Activated CD4-positive, alpha-beta T cell treated with anti-CD3 and anti-CD28 coated beads, Interleukin-2, amount 10 ng/mL, durations not matched to agents 24 days and 14 days (primary cell): ENCODE measurements at regions of chr20 and their contacts with region 1.

Region 1: DNA sequence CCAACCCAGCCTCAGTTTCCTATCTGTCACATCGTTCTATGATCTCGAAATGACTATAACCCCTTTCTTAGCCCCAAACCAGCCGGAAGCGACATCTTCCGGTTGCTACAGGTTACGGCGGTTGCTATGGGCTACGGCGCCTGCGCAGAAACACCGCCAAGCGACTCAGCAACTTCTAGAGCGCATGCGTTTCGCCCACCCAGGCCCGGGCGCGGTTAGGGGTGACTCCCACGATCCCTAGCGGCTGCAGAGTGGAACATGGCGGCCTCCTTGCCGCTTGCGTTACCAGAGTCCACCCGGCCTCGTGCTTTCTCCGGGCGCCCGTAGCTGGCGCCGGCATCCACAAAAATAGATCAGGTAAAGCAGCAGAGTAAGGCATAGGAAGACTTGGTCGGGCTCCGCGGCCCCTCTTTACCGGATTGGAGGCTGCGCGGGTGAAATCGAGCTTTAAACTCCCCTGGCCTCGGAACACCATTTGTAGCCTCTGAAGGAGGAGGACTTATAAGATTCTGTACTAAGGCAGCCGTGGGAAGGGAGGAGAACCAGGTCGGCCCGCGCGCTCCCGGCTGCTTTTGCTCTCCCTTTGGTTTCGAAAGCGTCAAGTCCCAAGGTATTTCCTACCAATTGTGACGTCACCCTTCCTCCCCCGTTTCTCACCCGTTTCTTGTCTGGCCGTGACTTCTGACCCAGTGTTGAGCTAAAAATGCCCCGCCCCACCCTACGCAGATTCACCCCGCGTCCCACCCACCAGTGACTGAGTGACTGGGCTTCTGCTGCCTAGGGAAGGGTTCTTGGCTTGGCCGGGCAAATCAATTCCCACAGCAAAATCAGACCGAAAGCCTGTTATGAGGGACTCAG is 3.5 kb downstream of the SDCBP2 start:
- DNase-seq: peak; percentile 99
- H3K4me3 Mint-ChIP-seq: no peak overlapping the region
- H3K27ac Mint-ChIP-seq: no peak overlapping the region
- H3K4me1 Mint-ChIP-seq: peaks cover 36% of the 10 kb centered on the region
- H3K27me3 Mint-ChIP-seq: no peaks in the 10 kb centered on the region

Region 2: GRCh38 chr20:1212607-1213396 is 112.6 kb before region 1 on chr20:
- intact Hi-C with region 1: no loop called
- DNase-seq: peak; percentile 91
- H3K4me3 Mint-ChIP-seq: no peak overlapping the region
- H3K27ac Mint-ChIP-seq: no peak overlapping the region
- H3K4me1 Mint-ChIP-seq: peaks cover 31% of the 10 kb centered on the region
- H3K27me3 Mint-ChIP-seq: peaks cover 21% of the 10 kb centered on the region

Region 3: DNA sequence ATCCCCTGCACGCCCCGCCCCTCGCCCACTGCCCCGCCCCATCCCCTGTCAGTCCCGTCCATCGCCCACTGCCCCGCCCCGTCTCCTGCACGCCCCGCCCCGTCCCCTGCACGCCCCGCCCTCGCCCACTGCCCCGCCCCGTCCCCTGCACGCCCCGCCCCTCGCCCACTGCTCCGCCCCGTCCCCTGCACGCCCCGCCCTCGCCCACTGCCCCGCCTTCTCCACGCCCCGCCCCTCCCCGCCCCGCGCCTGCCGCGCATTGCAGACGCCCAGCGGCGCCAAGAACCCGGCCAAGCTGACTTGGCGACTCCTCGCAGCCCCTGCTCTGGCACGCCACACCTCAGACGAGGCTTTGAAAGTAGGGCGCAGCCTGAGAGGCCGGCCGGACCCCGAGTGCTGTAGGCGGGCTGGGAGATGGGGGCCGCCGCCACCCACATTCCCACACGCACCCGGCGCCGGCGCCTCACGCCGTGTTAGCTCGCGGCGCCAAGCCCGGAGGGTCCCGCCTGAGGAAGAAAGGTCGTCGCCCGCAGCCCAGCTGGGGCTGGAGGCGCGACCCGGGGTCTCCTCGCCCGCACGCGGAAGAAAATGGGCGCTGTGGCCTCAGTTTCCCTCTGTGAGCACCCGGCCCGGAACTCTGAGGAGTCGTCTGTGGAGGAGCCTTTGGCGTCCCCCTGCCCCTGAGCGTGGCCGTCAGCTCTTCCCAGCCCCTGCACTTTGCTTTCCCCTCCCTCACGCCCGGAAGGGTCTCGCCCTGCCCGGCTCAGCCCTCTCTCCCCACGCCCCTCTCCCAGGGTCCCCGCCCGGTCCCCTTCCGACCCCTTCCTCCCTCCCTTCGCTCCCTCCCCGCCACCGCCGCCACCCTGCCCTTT is 99.4 kb before region 1 on chr20 and contains the start of gene RAD21L1:
- intact Hi-C with region 1: loop called (anchors 10 kb)
- DNase-seq: peak; percentile 88
- H3K4me3 Mint-ChIP-seq: peak within 1 kb of the TSS; percentile 86
- H3K27ac Mint-ChIP-seq: peak within 1 kb of the TSS; percentile 11
- H3K4me1 Mint-ChIP-seq: peaks cover 16% of the 10 kb centered on the region
- H3K27me3 Mint-ChIP-seq: peaks cover 50% of the 10 kb centered on the region
- total RNA-seq, gene RAD21L1: not detected in 2 replicates

Region 4: GRCh38 chr20:1346315-1346969 is 21.0 kb after region 1 on chr20:
- intact Hi-C with region 1: loop called (anchors 2 kb)
- DNase-seq: peak; percentile 43
- H3K4me3 Mint-ChIP-seq: peak overlapping the region; percentile 13
- H3K27ac Mint-ChIP-seq: peak overlapping the region; percentile 9
- H3K4me1 Mint-ChIP-seq: peaks cover 18% of the 10 kb centered on the region
- H3K27me3 Mint-ChIP-seq: no peaks in the 10 kb centered on the region

Region 5: DNA sequence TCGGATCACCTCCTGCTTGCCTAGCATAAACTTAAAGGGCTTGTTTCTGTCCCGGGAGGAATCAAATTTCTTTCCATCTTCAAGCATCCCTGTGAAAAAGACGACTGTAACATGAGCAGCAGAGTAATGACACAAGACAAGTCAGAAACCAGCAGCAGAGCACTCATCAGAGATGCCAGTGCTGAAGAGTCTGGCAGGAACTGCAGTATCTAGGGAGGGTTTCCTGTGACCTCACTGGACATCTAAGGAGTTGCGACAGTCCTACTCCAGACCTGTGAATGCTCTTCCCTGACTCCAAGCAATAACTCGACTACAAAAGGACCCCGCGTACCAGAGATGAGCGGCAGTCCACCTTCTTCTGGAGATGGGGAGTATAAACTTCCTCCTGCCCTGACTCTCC is 50.1 kb after region 1 on chr20:
- intact Hi-C with region 1: loop called (anchors 1 kb)
- DNase-seq: no peak
- H3K4me3 Mint-ChIP-seq: no peak overlapping the region
- H3K27ac Mint-ChIP-seq: peak overlapping the region; percentile 61
- H3K4me1 Mint-ChIP-seq: peaks cover 79% of the 10 kb centered on the region
- H3K27me3 Mint-ChIP-seq: no peaks in the 10 kb centered on the region

Region 6: DNA sequence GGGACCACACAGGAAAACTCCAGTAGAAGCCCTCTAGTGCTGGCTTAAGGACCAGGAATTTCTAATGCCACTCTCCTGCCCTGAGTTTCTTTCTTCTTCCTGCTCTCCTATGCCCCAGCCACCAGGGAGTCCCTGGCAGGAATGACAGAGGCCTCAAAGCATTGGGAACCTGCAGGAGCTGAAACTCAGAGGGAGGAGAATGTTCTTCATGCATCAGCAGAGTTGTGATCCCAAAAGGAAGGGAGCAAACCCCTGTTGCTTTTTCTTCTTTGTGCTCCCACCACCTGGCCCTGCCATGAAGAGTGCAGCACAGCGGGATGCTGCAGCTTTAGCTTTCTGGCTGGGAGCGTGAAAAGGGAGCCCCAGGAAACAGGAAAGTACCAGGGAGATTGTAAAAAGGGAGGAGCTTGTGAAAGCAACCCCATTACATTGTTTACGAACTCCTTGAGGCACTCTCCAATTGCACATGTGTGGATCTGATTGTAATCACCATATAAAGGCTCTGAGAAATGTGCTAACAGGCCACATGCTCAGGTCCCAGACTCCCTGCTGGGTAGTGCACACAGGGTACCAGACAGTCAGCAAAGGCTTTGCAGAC is 102.2 kb after region 1 on chr20:
- intact Hi-C with region 1: loop called (anchors 2 kb)
- DNase-seq: no peak
- H3K4me3 Mint-ChIP-seq: no peak overlapping the region
- H3K27ac Mint-ChIP-seq: no peak overlapping the region
- H3K4me1 Mint-ChIP-seq: peaks cover 36% of the 10 kb centered on the region
- H3K27me3 Mint-ChIP-seq: peaks cover 11% of the 10 kb centered on the region

Region 7: DNA sequence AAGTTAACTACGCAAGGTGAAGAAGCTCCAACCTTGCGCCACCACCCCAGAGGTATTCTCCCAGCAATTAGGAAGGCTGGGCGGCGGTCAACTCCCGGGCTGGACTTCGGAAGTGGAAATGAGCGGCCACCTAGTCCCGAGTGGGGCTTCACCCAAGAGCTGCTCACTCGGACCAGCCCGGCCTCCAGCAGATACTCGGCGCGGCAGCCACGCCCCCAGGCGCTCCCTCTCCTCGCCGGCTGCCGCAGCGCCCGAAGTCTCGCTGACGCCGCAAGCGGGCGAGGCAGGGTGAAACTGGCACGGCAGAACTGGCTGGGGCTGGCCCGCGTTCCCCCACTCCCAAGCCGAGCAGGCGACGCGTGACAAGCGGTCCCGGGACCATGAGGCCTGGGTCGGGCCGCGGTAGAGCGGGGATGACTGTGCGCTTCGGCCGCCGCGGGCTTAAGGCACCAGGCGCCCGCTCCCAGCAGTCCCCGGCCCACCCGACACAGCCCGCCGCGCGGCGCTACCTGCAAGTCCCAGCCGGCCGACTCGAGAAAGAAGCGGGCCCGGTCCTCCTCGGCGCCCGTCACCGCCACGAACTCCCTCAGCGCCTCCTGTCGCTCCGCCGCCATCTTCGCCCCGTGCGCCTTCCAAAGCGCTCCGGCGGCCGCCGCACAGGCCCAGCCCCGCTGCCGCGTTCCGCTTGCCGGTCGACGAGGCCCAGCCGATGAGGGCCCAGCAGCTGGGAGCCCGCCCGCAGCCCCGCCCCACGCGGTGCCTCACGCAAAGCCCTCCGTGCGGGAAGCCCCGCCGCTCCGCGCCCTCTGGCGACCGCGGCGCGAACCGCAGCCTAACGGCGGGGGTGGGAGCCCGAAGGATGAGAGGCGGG is 141.0 kb after region 1 on chr20 and contains the start of gene NSFL1C:
- intact Hi-C with region 1: loop called (anchors 1 kb)
- DNase-seq: peak; percentile 100
- H3K4me3 Mint-ChIP-seq: peak within 1 kb of the TSS; percentile 90
- H3K27ac Mint-ChIP-seq: peak within 1 kb of the TSS; percentile 82
- H3K4me1 Mint-ChIP-seq: peaks cover 44% of the 10 kb centered on the region
- H3K27me3 Mint-ChIP-seq: peaks cover 19% of the 10 kb centered on the region
- total RNA-seq, gene NSFL1C: 101 and 109 TPM in 2 replicates